CD8-positive, alpha-beta T cell (primary cell): ENCODE measurements at regions of chr3 and their contacts with region 1.

Region 1: DNA sequence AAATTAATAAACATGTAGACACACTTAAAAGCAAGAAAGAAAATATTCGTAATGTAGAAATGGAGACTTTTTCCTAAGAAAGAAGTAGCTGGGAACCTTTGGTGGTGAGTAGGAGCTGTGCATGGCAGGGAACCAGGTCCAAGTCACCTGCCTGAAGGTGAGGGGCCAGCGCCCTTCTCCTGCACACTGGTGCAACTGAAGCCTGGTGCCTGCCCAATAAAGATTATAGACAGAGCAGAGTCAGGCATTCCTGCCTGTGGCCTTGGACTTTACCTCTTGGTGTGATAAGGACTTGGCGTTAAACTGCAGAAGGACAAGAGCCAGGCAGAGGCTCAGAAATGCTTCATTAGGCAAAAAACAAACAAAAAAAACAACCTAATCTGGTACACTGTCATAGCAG is 14.2 kb downstream of the CFAP91 start:
- DNase-seq: no peak
- ATAC-seq: no peak
- H3K4me3 ChIP-seq: no peak overlapping the region
- H3K4me3 Mint-ChIP-seq: no peak overlapping the region
- H3K27ac ChIP-seq: no peak overlapping the region
- H3K27ac Mint-ChIP-seq: no peak overlapping the region
- H3K4me1 ChIP-seq: no peaks in the 10 kb centered on the region
- H3K4me1 Mint-ChIP-seq: no peaks in the 10 kb centered on the region
- H3K27me3 ChIP-seq: no peaks in the 10 kb centered on the region
- H3K27me3 Mint-ChIP-seq: no peaks in the 10 kb centered on the region
- CTCF ChIP-seq: no peak

Region 2: DNA sequence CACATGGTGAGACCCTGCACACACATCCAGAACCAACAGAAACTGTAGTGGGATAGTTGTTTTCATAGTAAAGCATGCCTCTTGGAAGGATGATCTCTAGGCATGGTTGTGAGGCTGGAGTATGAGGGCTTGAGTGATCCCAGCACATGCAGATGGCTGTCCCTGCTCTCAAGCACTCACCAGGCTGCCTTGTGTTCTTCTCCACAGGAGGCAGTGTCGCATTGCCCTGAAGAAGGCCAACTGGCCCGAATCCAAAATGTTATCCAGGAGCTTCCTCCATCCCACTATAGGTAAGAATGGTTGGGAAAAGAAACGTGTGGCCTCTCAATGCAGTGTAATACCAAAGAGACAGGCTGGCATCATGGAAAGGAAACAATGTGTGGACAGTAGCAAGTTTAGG is 336.3 kb before region 1 on chr3:
- CTCF ChIA-PET with region 1: no interaction called
- POLR2A ChIA-PET with region 1: no interaction called
- intact Hi-C with region 1: no loop called
- DNase-seq: no peak
- ATAC-seq: no peak
- H3K4me3 ChIP-seq: no peak overlapping the region
- H3K4me3 Mint-ChIP-seq: no peak overlapping the region
- H3K27ac ChIP-seq: no peak overlapping the region
- H3K27ac Mint-ChIP-seq: no peak overlapping the region
- H3K4me1 ChIP-seq: no peaks in the 10 kb centered on the region
- H3K4me1 Mint-ChIP-seq: no peaks in the 10 kb centered on the region
- H3K27me3 ChIP-seq: no peaks in the 10 kb centered on the region
- H3K27me3 Mint-ChIP-seq: no peaks in the 10 kb centered on the region
- CTCF ChIP-seq: no peak

Region 3: GRCh38 chr3:119652306-119653033 is 64.5 kb before region 1 on chr3:
- CTCF ChIA-PET with region 1: no interaction called
- POLR2A ChIA-PET with region 1: no interaction called
- intact Hi-C with region 1: loop called in 1 of 2 experiments (anchors 5 kb)
- DNase-seq: no peak
- ATAC-seq: no peak
- H3K4me3 ChIP-seq: no peak overlapping the region
- H3K4me3 Mint-ChIP-seq: no peak overlapping the region
- H3K27ac ChIP-seq: no peak overlapping the region
- H3K27ac Mint-ChIP-seq: no peak overlapping the region
- H3K4me1 ChIP-seq: no peaks in the 10 kb centered on the region
- H3K4me1 Mint-ChIP-seq: no peaks in the 10 kb centered on the region
- H3K27me3 ChIP-seq: no peaks in the 10 kb centered on the region
- H3K27me3 Mint-ChIP-seq: no peaks in the 10 kb centered on the region
- CTCF ChIP-seq: no peak